Activated T-helper 1 cell treated with anti-CD3 and anti-CD28 coated beads, Interleukin-12 subunit alpha, Interleukin-12 subunit beta, Interleukin-2, Interleukin-4 antibody, amounts not matched to agents 30 ng/mL and 10 ng/mL and 1 ng/mL, durations not matched to agents 14 hours and 24 hours and 36 hours (primary cell): ENCODE measurements at regions of chr7 and their contacts with region 1.

Region 1: DNA sequence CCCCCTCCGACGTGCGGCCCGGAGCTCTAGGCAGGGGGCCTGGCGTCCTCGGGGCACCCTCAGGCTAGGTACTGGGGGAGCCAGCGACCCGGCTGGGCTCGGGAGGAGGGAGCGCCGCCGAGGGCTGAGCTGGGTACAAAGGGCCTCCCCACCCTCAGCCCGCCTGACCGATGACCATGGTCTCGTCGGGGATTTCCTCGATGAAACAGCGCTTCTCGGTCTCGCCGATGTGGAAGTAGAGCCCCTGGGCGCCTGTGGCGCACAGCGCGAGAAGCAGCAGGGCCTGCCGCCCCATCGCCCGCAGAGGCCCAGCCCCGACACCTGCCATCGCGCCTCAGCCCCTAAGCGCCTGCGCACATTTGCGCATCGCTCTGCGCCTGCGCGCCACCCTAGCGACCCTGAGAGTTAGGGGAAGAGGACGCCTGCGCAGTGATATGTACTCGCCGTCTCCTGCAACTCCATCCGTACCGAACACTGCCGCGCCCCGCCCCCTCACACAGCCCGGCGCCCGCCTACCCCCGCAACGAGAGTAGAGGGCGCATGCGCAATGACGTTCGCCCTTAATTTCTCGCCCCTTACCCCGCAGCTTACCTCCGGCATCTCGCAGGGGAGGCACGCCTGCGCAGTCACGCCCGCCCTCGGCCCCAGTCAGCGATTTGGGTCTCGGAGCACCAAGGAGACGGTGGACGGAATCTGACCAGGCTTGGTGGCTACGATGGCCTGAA is at the start of gene TMED4:
- DNase-seq: peak; percentile 100
- H3K4me3 Mint-ChIP-seq: peak within 1 kb of the TSS; percentile 93
- H3K27ac Mint-ChIP-seq: peak within 1 kb of the TSS; percentile 93
- H3K4me1 Mint-ChIP-seq: peaks cover 33% of the 10 kb centered on the region
- H3K27me3 Mint-ChIP-seq: no peaks in the 10 kb centered on the region
- total RNA-seq, gene TMED4: 74.9 and 79.6 TPM in 2 replicates

Region 2: GRCh38 chr7:44755698-44756627 is 173.9 kb after region 1 on chr7:
- intact Hi-C with region 1: no loop called
- DNase-seq: no peak
- H3K4me3 Mint-ChIP-seq: no peak overlapping the region
- H3K27ac Mint-ChIP-seq: no peak overlapping the region
- H3K4me1 Mint-ChIP-seq: peaks cover 23% of the 10 kb centered on the region
- H3K27me3 Mint-ChIP-seq: no peaks in the 10 kb centered on the region

Region 3: DNA sequence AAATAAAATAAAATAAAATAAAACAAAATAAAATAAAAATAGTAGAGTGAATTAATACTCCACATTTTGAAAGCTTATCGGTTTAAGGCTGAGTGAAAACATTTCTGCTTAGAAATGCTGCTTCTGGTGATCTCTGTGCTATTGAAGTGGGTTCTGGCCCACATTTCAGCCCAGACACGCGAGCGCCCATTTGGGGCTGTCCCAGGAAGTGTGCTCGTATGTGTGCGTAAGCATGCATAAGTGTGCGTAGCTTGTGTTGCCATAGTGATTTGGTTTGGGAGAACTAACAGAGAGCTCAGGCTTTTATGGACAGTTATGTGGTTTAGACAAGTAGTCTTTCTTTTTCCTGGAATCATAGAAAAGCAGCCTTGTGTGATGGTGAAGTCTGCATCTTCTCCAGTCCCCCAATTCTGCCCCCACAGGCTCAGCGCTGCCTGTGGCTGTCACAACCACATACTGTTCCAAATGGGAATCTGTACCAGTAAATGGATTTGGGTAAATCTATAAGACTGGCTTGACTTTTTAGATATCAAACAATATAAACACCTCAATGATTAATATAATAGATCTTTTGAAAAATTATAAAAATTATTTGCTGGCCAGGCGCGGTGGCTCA is 333.1 kb after region 1 on chr7:
- intact Hi-C with region 1: loop called (anchors 2 kb)
- DNase-seq: peak; percentile 78
- H3K4me3 Mint-ChIP-seq: peak overlapping the region; percentile 67
- H3K27ac Mint-ChIP-seq: peak overlapping the region; percentile 85
- H3K4me1 Mint-ChIP-seq: peaks cover 16% of the 10 kb centered on the region
- H3K27me3 Mint-ChIP-seq: peaks cover 2% of the 10 kb centered on the region